Panc1 (cell line): ENCODE measurements at regions of chr3 and their contacts with region 1.

Region 1: DNA sequence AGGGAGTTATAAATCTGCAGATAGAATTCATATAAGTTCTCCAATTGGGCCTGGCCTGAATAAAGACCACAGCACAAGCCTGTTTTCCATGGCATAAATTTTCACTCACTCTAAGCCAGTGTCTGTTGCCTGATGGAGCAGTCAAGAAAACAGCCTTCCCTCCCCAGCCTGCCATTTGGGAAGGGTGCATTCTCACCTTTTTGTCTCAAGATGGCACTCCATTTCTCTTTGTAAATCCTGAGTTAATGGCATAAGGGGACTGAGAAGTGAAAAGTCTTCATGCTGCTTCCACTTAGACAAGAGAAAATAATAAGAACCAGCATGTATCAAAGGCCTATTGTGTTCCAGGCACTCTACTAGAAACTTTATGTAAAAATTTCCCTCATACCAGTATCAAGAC is 115.6 kb upstream of the MANF start:
- DNase-seq: no peak
- ATAC-seq: no peak
- H3K4me3 ChIP-seq: no peak overlapping the region
- H3K27ac ChIP-seq: no peak overlapping the region
- H3K4me1 ChIP-seq: no peaks in the 10 kb centered on the region
- H3K27me3 ChIP-seq: no peaks in the 10 kb centered on the region
- CTCF ChIP-seq: no peak

Region 2: GRCh38 chr3:50687127-50687751 is 582.2 kb before region 1 on chr3:
- CTCF ChIA-PET with region 1: no interaction called
- POLR2A ChIA-PET with region 1: no interaction called
- in situ Hi-C with region 1: no loop called
- intact Hi-C with region 1: no loop called
- DNase-seq: no peak
- ATAC-seq: no peak
- H3K4me3 ChIP-seq: no peak overlapping the region
- H3K27ac ChIP-seq: no peak overlapping the region
- H3K4me1 ChIP-seq: no peaks in the 10 kb centered on the region
- H3K27me3 ChIP-seq: no peaks in the 10 kb centered on the region
- CTCF ChIP-seq: no peak

Region 3: DNA sequence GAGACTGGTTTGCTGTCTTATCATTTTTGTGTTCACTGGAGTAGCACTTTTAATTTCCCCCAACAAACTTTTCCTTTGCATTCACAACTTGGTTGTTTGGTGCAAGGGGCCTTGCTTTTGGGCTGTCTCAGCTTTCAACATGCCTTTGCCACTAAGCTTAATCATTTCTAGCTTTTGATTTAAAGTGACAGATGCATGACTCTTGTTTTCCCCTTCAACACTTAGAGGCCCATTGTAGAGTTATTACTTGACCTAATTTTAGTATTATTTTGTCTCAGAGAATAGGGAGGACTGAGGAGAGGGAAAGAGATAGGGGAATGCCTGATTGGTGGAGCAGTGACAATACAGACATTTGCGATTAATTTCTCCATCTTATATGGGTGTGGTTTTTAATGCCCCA is 224.5 kb before region 1 on chr3:
- CTCF ChIA-PET with region 1: no interaction called
- POLR2A ChIA-PET with region 1: interaction called, 10 read pairs
- in situ Hi-C with region 1: no loop called
- intact Hi-C with region 1: no loop called
- DNase-seq: no peak
- ATAC-seq: no peak
- H3K4me3 ChIP-seq: no peak overlapping the region
- H3K27ac ChIP-seq: no peak overlapping the region
- H3K4me1 ChIP-seq: no peaks in the 10 kb centered on the region
- H3K27me3 ChIP-seq: no peaks in the 10 kb centered on the region
- CTCF ChIP-seq: no peak

Region 4: DNA sequence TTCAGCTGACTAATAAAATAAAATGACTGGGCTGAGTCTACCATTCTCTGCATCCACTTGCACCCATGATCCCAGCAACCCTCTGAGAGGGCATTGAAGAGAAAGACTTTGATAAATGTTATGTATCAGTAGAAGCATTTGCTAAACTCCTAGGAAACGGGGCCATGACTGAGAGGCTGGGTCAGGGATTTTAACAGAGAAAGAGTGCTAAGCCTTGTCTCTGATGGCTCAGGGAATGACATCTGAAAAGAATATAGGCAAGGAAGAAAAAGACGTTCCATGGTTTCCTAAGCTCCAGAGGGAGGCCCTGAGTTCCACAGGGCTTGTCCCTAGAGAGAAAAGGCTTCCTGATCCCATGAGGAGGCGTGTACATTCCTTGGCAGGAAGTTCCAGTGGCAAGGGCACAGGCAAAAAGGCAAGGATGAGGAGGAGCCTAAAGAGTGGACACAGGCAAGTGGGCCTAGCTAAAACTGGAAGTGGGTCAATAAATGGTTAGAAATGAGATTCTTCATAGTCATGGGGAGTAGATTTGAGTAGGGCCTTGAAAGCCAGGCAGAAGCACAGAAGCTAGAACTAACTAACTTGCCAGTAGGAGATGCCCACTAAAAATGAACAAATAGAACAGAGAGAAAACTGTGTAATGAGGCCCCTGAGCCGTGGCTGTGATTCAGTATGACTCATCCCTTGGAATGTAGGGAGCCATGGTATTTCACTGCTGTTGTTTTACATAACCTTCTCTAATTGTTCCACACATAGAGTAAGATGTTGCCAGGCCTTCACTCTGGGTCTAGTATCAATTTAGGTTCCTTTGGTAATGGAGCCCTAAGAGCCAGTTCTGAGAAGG is 70.8 kb after region 1 on chr3:
- CTCF ChIA-PET with region 1: no interaction called
- POLR2A ChIA-PET with region 1: interaction called, 11 read pairs
- in situ Hi-C with region 1: no loop called
- intact Hi-C with region 1: no loop called
- DNase-seq: peak; percentile 18
- ATAC-seq: peak; percentile 94
- H3K4me3 ChIP-seq: no peak overlapping the region
- H3K27ac ChIP-seq: no peak overlapping the region
- H3K4me1 ChIP-seq: 0 out of 2 replicates have a peak, but pooled peaks cover 4% of the 10 kb centered on the region
- H3K27me3 ChIP-seq: no peaks in the 10 kb centered on the region
- CTCF ChIP-seq: no peak